Activated CD8-positive, alpha-beta T cell treated with anti-CD3 and anti-CD28 coated beads, Interleukin-2, amount 10 ng/mL, durations not matched to agents 7 days and 5 days (primary cell): ENCODE measurements at regions of chr7 and their contacts with region 1.

Region 1: DNA sequence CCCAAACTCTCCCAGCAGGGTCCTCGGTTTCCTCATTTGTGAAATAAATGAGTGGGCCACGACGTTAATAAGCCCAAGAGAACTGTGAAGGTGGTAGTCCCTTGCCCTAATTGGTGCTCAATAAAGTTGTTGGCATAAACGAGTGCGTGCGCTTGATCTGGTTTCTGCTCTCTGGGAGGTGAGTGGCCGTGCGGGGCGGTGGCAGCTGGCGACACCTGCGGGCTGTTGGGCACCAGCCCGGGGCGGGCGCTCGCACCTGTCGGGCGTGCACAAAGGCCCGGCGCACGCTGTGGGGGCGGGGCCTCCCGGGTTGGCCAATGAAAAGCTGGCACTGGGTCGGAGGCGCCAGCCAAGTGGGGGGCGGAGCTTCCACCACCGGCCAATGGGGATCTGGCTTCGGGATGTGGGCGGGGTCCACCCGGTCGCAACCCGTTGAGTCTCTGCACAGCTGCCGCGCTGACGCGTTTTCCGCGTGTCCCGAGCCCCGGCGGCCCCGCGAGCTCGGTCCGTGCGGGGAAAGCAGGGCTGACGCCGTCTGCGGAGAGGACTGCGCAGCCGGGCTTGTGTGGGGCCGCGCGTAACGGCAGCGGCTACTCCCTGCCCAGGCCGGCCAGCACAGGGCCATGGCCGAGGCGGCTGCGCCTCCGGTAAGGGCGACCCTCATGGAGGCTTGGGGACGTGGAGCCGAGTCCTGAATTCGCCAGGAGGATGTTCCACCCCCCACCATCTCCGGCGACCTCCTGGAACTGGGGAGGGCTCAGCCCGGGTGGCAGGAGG is 23.0 kb downstream of the ZNF783 start:
- DNase-seq: peak; percentile 98
- ATAC-seq: peak; percentile 97
- H3K4me3 Mint-ChIP-seq: peak overlapping the region; percentile 74
- H3K27ac Mint-ChIP-seq: peak overlapping the region; percentile 73
- H3K4me1 Mint-ChIP-seq: peaks cover 38% of the 10 kb centered on the region
- H3K27me3 Mint-ChIP-seq: no peaks in the 10 kb centered on the region

Region 2: DNA sequence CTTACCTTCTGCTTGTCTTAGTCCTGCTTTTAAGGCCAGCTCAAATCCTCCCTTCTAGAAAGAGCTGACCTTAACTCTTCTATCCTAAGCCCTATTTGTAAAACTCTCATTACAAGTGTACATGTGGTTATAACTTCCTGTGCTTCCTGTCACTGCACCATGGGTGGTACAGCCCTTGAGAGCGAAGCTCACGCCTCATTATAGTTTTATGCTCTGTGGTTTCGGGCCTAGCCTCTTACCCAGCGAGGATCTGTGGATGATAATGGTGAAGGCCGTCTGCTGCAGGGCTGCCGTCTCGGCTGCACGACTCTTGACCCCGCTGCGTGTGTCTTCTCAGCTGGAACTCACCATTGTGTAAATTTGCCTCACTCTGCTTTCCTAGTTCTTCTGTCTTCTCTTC is 511.7 kb before region 1 on chr7:
- CTCF ChIA-PET with region 1: no interaction called
- POLR2A ChIA-PET with region 1: no interaction called
- DNase-seq: peak; percentile 78
- ATAC-seq: peak; percentile 98
- H3K4me3 Mint-ChIP-seq: peak overlapping the region; percentile 17
- H3K27ac Mint-ChIP-seq: peak overlapping the region; percentile 86
- H3K4me1 Mint-ChIP-seq: peaks cover 27% of the 10 kb centered on the region
- H3K27me3 Mint-ChIP-seq: no peaks in the 10 kb centered on the region

Region 3: GRCh38 chr7:149195180-149196150 is 89.6 kb before region 1 on chr7 and contains the start of gene ZNF282:
- CTCF ChIA-PET with region 1: interaction called, 11 read pairs
- POLR2A ChIA-PET with region 1: no interaction called
- DNase-seq: peak; percentile 81
- ATAC-seq: peak; percentile 92
- H3K4me3 Mint-ChIP-seq: peak within 1 kb of the TSS; percentile 87
- H3K27ac Mint-ChIP-seq: peak within 1 kb of the TSS; percentile 85
- H3K4me1 Mint-ChIP-seq: peaks cover 50% of the 10 kb centered on the region
- H3K27me3 Mint-ChIP-seq: no peaks in the 10 kb centered on the region
- total RNA-seq, gene ZNF282: 28.4 to 30.6 TPM